ENCODE measurements at regions of chr2 and their contacts with region 1.

Region 1: DNA sequence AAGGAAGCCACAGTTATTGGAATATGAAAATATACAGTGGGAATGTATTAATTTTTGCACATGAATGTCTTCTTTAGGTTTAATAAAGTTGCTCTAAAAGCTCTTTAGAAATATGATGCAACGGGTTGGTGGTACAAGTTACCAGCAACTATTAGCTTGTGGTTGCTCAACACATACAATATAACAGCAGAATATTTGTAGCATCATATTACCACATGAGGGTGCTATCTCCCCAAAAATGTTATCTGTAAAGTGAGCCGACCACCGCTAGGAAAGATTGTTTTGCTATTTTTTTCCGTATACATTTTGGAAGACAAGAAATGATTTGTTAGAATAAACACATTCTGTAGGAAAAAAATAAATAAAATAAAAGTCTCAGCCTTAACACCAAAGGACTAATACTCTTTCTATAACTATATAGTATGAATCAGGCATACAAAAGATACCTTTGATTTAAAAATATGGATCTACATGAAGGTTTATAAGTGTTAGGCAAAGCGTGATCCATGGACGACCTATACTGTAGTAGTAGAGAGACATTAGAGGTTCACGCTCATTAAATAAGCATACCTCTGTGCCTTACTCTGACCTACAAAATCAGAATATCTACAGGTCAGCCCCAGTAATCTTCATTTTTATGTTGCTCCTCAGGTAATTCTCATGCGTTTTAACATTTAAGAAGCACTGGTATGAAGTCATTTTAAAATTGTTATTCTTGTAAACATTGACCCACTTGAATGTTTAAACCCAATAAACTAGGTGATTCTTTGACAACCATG is 1110.6 kb upstream of the ACVR2A start:
- DNase-seq: peak; percentile 81
- H3K4me3 ChIP-seq: no peak overlapping the region
- H3K27ac ChIP-seq: no peak overlapping the region
- H3K4me1 ChIP-seq: no peaks in the 10 kb centered on the region
- H3K27me3 ChIP-seq: no peaks in the 10 kb centered on the region
- CTCF ChIP-seq: peak; percentile 78

Region 2: DNA sequence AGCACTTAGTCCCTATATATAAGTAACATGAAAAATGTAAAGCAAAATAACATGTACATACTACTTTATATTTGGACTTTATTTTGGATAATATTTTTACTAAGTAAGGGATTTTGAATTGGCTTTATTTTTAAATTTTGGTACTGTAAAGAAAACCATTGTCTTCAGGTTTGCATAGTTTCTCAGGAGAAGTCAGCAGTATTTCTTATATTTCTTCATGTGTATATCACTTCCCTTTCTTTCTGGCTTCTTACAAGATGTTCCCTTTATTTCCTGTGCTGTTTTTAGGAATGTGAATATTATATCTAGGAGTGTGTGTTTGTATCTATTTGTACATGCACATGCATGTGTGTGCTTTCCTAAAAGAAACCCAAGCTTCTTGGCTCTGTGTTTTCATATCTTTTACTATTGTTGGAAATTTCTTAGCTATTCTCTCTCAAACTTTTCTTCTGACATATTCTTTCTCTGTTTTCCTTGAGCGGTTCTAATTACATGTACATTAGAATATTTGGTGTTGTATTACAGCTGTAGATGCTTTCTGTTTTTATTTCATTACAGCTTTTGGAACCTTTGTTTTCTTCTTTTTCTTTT is 439.1 kb before region 1 on chr2:
- CTCF ChIA-PET with region 1: no interaction called
- POLR2A ChIA-PET with region 1: no interaction called
- intact Hi-C with region 1: no loop called
- DNase-seq: no peak
- H3K4me3 ChIP-seq: no peak overlapping the region
- H3K27ac ChIP-seq: no peak overlapping the region
- H3K4me1 ChIP-seq: no peaks in the 10 kb centered on the region
- H3K27me3 ChIP-seq: no peaks in the 10 kb centered on the region
- CTCF ChIP-seq: no peak

Region 3: GRCh38 chr2:146853741-146854444 is 119.7 kb after region 1 on chr2:
- CTCF ChIA-PET with region 1: no interaction called
- POLR2A ChIA-PET with region 1: no interaction called
- intact Hi-C with region 1: no loop called
- DNase-seq: peak; percentile 17
- H3K4me3 ChIP-seq: no peak overlapping the region
- H3K27ac ChIP-seq: no peak overlapping the region
- H3K4me1 ChIP-seq: peaks cover 18% of the 10 kb centered on the region
- H3K27me3 ChIP-seq: no peaks in the 10 kb centered on the region
- CTCF ChIP-seq: no peak

Region 4: DNA sequence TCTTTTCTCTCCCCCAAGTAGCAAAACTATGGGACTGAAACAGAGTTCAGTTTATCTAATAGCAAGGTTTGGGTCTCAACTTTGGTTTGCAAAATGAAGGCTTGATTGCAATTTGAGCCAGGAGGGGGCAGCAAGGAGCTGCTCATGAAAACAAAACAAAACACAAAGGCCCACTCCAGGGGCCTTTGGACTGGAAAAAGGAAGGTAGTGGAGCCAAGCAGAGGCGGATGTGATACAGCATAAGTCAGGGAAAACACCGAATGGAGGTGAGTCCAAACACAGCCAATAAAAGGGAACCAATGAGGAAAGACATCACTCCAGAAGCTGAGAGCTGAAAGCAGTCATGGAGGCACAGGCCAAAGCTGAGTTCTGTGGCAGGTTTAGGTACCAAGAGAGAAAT is 310.9 kb after region 1 on chr2:
- CTCF ChIA-PET with region 1: interaction called, 4 read pairs
- POLR2A ChIA-PET with region 1: no interaction called
- intact Hi-C with region 1: loop called (anchors 10 kb)
- DNase-seq: peak; percentile 73
- H3K4me3 ChIP-seq: no peak overlapping the region
- H3K27ac ChIP-seq: no peak overlapping the region
- H3K4me1 ChIP-seq: no peaks in the 10 kb centered on the region
- H3K27me3 ChIP-seq: no peaks in the 10 kb centered on the region
- CTCF ChIP-seq: peak; percentile 78

Region 5: DNA sequence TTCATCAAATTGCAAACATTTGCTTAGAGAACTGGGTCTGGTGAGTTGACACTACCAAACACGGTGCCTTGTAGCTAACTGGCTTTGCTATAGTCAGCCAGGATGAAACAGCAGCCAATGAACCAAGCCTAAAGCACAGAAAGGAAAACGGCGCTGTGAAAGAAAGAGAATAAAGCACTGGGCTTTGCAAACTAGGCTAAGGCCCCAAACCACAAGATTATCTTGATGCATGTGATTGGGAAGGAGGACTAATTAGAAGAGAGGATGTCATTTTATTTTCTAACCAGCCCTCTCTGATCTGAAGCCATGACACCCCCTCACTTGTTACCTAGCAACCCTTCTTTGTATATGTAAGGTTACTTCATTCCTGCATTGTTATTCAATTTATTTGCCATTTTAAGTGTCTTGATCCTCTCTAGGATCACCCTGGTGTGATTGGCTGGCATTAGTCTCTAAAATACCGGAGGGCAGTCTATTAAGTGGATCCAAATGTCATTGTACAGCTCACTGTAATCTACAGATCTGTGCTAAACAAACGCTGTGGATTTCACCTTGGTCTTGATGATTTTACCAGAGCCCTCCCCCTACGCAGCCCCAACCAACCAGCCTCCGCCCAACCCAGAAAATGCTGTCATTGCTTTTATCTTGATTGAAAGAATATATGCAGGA is 715.2 kb after region 1 on chr2:
- CTCF ChIA-PET with region 1: no interaction called
- POLR2A ChIA-PET with region 1: no interaction called
- intact Hi-C with region 1: loop called (anchors 10 kb)
- DNase-seq: peak; percentile 70
- H3K4me3 ChIP-seq: no peak overlapping the region
- H3K27ac ChIP-seq: peak overlapping the region; percentile 92
- H3K4me1 ChIP-seq: peaks cover 61% of the 10 kb centered on the region
- H3K27me3 ChIP-seq: no peaks in the 10 kb centered on the region
- CTCF ChIP-seq: no peak

Region 6: DNA sequence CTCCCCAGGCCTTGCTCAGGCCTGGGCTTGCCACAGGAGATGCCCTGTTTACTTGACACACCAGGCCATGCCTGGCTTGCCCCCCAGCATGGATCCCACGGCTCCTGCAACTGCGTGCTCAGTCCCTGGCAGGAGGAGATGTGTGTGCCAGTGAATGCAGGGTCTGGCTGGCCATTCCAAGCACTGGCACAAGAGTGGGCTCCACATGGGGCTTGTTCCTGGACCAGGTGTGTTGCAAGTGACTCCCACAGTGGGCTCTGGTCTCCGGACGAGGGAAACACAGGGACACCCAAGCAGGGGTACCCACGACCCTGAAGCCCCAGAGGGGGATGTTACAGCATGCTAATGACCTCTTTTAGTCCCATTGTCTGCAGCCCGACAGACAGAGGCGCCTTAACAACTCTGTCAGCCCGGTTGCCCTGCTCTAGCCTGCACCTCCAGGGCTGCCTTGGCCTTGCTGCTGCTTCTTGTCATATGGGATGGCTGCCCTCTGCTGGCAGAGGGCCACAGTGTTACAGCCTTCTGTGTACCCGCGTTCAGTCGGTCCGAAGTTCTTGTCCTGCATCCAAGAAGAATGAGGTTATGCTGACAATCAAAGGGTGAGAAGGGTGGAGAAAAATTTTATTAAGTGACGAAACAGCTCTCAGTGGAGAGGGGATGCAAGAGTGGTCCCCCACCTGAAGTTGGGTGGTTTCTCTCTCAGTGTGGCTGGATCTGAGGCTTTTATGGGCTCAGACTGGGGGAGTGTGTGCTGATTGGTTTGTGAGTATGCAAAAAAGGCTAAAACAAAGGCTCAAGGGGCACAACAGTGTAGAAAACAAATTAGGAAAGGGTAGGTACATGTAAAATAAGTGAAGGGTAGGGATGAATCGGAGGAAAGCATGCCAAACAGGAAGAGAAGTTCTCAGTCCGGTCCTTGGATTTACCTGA is 1467.1 kb after region 1 on chr2:
- CTCF ChIA-PET with region 1: no interaction called
- POLR2A ChIA-PET with region 1: no interaction called
- intact Hi-C with region 1: loop called (anchors 10 kb)
- DNase-seq: peak; percentile 77
- H3K4me3 ChIP-seq: no peak overlapping the region
- H3K27ac ChIP-seq: no peak overlapping the region
- H3K4me1 ChIP-seq: no peaks in the 10 kb centered on the region
- H3K27me3 ChIP-seq: no peaks in the 10 kb centered on the region
- CTCF ChIP-seq: peak; percentile 74

Measured in A673 (cell line).